Activated CD4-positive, alpha-beta T cell treated with anti-CD3 and anti-CD28 coated beads, Interleukin-2, amount 10 ng/mL, durations not matched to agents 7 days and 5 days (primary cell): ENCODE measurements at regions of chr6 and their contacts with region 1.

Region 1: GRCh38 chr6:137707590-137708360 is 159.3 kb upstream of the TNFAIP3 start:
- DNase-seq: peak; percentile 93
- H3K4me3 Mint-ChIP-seq: peak overlapping the region; percentile 64
- H3K27ac Mint-ChIP-seq: peak overlapping the region; percentile 96
- H3K4me1 Mint-ChIP-seq: peaks cover 69% of the 10 kb centered on the region
- H3K27me3 Mint-ChIP-seq: no peaks in the 10 kb centered on the region

Region 2: GRCh38 chr6:137697267-137697938 is 10.4 kb before region 1 on chr6:
- CTCF ChIA-PET with region 1: interaction called, 11 read pairs
- POLR2A ChIA-PET with region 1: interaction called, 3 read pairs
- DNase-seq: no peak
- H3K4me3 Mint-ChIP-seq: no peak overlapping the region
- H3K27ac Mint-ChIP-seq: no peak overlapping the region
- H3K4me1 Mint-ChIP-seq: peaks cover 27% of the 10 kb centered on the region
- H3K27me3 Mint-ChIP-seq: no peaks in the 10 kb centered on the region

Region 3: DNA sequence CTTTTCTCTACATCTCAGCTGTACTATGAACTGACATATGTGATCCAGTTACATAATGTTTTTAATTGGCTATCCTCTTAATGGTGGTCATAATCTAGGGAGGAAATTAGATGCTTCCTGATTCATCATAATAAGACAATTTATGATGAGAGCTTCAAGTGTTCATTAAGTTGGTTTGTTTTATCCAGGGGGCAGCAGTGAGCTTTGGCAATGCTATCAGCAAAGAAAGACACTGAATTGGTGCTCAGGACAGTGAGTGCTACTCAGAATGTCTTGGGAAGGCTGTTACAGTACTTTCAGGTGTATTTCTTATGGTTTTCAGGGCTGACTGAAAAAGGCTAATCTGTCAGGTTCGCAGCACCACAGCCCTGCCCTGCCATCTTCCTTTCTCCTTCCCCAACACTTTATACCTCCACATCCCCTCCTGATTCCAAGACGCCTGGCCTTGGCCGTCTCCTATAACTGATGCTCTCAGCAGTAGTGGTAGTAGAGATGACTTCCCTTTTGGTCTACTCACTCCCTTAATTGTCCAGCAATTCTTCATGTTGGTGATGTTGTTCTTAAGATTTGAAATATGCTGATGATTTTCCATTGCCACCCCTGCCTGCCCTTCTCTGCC is 92.3 kb after region 1 on chr6:
- CTCF ChIA-PET with region 1: interaction called, 17 read pairs
- POLR2A ChIA-PET with region 1: no interaction called
- DNase-seq: peak; percentile 75
- H3K4me3 Mint-ChIP-seq: no peak overlapping the region
- H3K27ac Mint-ChIP-seq: peak overlapping the region; percentile 46
- H3K4me1 Mint-ChIP-seq: peaks cover 65% of the 10 kb centered on the region
- H3K27me3 Mint-ChIP-seq: no peaks in the 10 kb centered on the region

Region 4: DNA sequence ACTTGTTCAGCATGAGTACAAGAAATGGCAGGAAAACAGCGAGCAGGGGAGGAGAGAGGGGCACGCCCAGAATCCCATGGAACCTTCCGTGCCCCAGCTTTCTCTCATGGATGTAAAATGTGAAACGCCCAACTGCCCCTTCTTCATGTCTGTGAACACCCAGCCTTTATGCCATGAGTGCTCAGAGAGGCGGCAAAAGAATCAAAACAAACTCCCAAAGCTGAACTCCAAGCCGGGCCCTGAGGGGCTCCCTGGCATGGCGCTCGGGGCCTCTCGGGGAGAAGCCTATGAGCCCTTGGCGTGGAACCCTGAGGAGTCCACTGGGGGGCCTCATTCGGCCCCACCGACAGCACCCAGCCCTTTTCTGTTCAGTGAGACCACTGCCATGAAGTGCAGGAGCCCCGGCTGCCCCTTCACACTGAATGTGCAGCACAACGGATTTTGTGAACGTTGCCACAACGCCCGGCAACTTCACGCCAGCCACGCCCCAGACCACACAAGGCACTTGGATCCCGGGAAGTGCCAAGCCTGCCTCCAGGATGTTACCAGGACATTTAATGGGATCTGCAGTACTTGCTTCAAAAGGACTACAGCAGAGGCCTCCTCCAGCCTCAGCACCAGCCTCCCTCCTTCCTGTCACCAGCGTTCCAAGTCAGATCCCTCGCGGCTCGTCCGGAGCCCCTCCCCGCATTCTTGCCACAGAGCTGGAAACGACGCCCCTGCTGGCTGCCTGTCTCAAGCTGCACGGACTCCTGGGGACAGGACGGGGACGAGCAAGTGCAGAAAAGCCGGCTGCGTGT is 170.9 kb after region 1 on chr6:
- CTCF ChIA-PET with region 1: interaction called, 12 read pairs
- POLR2A ChIA-PET with region 1: interaction called, 3 read pairs
- DNase-seq: no peak
- H3K4me3 Mint-ChIP-seq: no peak overlapping the region
- H3K27ac Mint-ChIP-seq: peak overlapping the region; percentile 25
- H3K4me1 Mint-ChIP-seq: peaks cover 81% of the 10 kb centered on the region
- H3K27me3 Mint-ChIP-seq: no peaks in the 10 kb centered on the region

Region 5: DNA sequence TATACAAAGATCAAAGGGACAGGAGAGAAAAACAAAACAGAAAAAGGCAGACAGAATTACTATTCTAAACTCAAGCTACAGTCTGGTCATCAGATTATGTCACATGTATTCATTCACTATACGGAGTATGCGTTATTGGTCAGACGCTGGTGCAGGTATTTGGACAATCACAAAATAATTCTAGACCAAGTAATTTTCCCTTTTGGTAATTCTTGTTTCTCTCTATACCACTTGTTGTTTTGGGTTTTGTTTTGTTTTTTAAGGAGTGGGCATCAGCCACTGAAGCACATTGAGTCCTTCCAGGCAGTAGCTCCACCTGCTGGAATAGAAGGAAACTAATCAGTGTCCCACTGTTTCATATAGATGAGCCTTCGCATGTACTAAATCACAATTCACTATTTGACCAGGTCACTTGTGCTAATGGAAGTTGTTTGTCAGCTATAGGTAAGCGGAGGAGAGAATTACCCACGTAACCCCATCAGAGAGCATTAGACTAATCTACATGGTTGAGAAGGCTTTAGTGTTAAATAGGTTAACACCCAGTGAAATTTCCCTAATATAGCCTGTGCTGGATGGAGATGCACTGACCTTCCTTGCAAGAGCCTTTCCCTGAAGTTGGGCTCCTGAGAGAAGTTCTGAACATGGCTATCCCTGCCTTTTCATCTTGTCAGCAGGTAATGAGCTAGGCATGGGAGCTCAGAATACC is 237.2 kb after region 1 on chr6:
- CTCF ChIA-PET with region 1: interaction called, 14 read pairs
- POLR2A ChIA-PET with region 1: no interaction called
- DNase-seq: peak; percentile 54
- H3K4me3 Mint-ChIP-seq: no peak overlapping the region
- H3K27ac Mint-ChIP-seq: no peak overlapping the region
- H3K4me1 Mint-ChIP-seq: peaks cover 30% of the 10 kb centered on the region
- H3K27me3 Mint-ChIP-seq: no peaks in the 10 kb centered on the region

Region 6: DNA sequence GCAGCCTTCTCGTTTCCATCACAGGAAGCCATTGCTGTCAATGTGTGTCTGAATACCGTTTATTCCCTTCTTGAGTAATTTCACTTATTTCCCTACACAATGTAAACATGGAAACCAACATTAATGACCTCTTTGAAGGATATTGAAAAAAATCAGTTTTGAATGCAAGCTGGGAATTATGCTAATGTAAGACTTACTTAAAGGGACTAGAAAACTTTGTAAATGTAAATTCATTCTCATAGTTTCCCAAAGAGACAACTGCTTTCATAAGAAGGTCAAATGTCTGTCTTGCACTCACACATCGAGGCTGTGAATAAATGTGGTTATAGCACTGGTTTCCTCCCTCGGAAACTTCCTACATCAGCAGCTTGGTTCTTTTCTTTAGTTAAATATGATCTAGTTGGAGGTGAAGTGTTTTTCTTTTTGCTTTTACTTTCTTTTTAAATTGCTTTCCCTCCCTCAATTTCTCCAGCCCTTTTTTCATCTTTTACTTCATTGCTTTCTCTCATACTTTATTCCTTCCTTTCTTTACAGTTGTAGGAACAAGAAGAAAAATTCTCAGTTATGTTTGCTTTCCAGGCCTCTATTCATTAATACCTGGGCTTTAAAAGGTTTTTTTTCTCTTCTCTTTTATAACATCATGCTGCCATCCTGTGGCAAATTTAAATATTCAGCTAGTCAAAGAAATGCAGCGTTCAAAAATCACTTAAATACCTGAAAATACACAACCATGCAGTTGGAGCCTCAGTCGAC is 267.6 kb after region 1 on chr6:
- CTCF ChIA-PET with region 1: interaction called, 10 read pairs
- POLR2A ChIA-PET with region 1: no interaction called
- DNase-seq: peak; percentile 52
- H3K4me3 Mint-ChIP-seq: peak overlapping the region; percentile 68
- H3K27ac Mint-ChIP-seq: peak overlapping the region; percentile 92
- H3K4me1 Mint-ChIP-seq: peaks cover 48% of the 10 kb centered on the region
- H3K27me3 Mint-ChIP-seq: no peaks in the 10 kb centered on the region